Mammary epithelial cell (primary cell): ENCODE measurements at regions of chr19 and their contacts with region 1.

Region 1: GRCh38 chr19:39445265-39446111 is at the start of gene SUPT5H:
- DNase-seq: peak; percentile 97
- H3K4me3 ChIP-seq: peak within 1 kb of the TSS; percentile 78 to 93 (median 90)
- H3K27ac ChIP-seq: peak within 1 kb of the TSS; percentile 81
- H3K4me1 ChIP-seq: peaks cover 27% of the 10 kb centered on the region
- H3K27me3 ChIP-seq: no peaks in the 10 kb centered on the region
- CTCF ChIP-seq: no peak
- total RNA-seq, gene SUPT5H: 66.7 to 120 TPM

Region 2: GRCh38 chr19:39247701-39248664 is 197.5 kb before region 1 on chr19:
- CTCF ChIA-PET with region 1: no interaction called
- dilution Hi-C with region 1: no loop called
- in situ Hi-C with region 1: no loop called
- intact Hi-C with region 1: no loop called
- DNase-seq: no peak
- H3K4me3 ChIP-seq: no peak overlapping the region
- H3K27ac ChIP-seq: no peak overlapping the region
- H3K4me1 ChIP-seq: peaks cover 5% of the 10 kb centered on the region
- H3K27me3 ChIP-seq: peaks cover 18% of the 10 kb centered on the region
- CTCF ChIP-seq: no peak

Region 3: GRCh38 chr19:39480337-39481228 is 35.1 kb after region 1 on chr19 and contains the start of gene TIMM50:
- CTCF ChIA-PET with region 1: no interaction called
- dilution Hi-C with region 1: no loop called
- in situ Hi-C with region 1: no loop called
- intact Hi-C with region 1: loop called (anchors 5 kb)
- DNase-seq: peak; percentile 91
- H3K4me3 ChIP-seq: peak within 1 kb of the TSS; percentile 64 to 89 (median 77)
- H3K27ac ChIP-seq: peak within 1 kb of the TSS; percentile 88
- H3K4me1 ChIP-seq: peaks cover 13% of the 10 kb centered on the region
- H3K27me3 ChIP-seq: no peaks in the 10 kb centered on the region
- CTCF ChIP-seq: no peak
- total RNA-seq, gene TIMM50: 36.0 to 96.0 TPM

Region 4: GRCh38 chr19:39539519-39540332 is 94.2 kb after region 1 on chr19 and contains the start of gene EID2:
- CTCF ChIA-PET with region 1: interaction called, 4 read pairs
- dilution Hi-C with region 1: no loop called
- in situ Hi-C with region 1: loop called (anchors 5 kb)
- intact Hi-C with region 1: loop called (anchors 1 kb)
- DNase-seq: peak; percentile 84
- H3K4me3 ChIP-seq: peak within 1 kb of the TSS; percentile 73 to 90 (median 88)
- H3K27ac ChIP-seq: peak within 1 kb of the TSS; percentile 69
- H3K4me1 ChIP-seq: peaks cover 36% of the 10 kb centered on the region
- H3K27me3 ChIP-seq: no peaks in the 10 kb centered on the region
- CTCF ChIP-seq: peak; percentile 66 to 85
- total RNA-seq, gene EID2: 9.7 to 15.0 TPM

Region 5: GRCh38 chr19:39671738-39672363 is 226.4 kb after region 1 on chr19:
- CTCF ChIA-PET with region 1: interaction called, 5 read pairs
- dilution Hi-C with region 1: no loop called
- in situ Hi-C with region 1: loop called in 1 of 2 experiments (anchors 25 kb)
- intact Hi-C with region 1: loop called (anchors 1 kb)
- DNase-seq: peak; percentile 31
- H3K4me3 ChIP-seq: no peak overlapping the region
- H3K27ac ChIP-seq: no peak overlapping the region
- H3K4me1 ChIP-seq: no peaks in the 10 kb centered on the region
- H3K27me3 ChIP-seq: peaks cover 2% of the 10 kb centered on the region
- CTCF ChIP-seq: peak; percentile 41 to 63